ENCODE measurements at regions of chr15 and their contacts with region 1.

Region 1: DNA sequence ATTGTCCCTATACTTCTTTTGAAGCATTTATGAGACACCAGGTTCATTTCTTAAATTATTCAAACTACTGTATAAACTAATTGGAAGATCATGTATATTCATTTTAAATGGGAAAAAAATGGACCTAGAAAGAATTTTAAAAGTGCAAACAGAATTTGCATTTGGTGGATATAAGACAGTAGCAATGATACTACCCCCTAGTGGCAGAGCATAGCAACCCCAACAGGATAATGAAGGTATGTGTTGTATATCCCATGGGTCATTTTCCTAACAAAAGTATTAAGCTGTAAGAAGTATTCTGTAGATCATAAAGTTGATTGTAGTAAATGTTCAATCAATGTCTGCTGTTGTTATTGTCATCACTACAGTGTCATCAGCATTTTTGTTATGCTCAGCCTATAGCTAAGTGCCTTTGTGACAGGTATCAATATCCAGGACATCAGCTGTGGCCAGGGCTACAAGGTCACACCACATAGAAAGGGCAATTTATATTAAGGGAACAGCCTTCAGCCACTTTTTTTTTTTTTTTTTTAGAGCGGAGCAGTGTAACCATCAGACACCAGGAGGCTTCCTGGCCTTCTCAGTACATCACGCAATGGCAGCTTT is 175.8 kb downstream of the FOXB1 start:
- DNase-seq: peak; percentile 24 to 42 (median 34)
- ATAC-seq: peak; percentile 86
- H3K4me3 ChIP-seq: no peak overlapping the region
- H3K27ac ChIP-seq: no peak overlapping the region
- H3K4me1 ChIP-seq: no peaks in the 10 kb centered on the region
- H3K27me3 ChIP-seq: peaks cover 6 to 9% of the 10 kb centered on the region in 2 experiments; a peak in 2 of 5 replicates
- CTCF ChIP-seq: peak; percentile 45 to 77 (median 61); a peak in 5 of 6 replicates
- EP300 ChIP-seq: no peak
- POLR2A ChIP-seq: no peak
- RAD21 ChIP-seq: peak; percentile 71 to 79

Region 2: DNA sequence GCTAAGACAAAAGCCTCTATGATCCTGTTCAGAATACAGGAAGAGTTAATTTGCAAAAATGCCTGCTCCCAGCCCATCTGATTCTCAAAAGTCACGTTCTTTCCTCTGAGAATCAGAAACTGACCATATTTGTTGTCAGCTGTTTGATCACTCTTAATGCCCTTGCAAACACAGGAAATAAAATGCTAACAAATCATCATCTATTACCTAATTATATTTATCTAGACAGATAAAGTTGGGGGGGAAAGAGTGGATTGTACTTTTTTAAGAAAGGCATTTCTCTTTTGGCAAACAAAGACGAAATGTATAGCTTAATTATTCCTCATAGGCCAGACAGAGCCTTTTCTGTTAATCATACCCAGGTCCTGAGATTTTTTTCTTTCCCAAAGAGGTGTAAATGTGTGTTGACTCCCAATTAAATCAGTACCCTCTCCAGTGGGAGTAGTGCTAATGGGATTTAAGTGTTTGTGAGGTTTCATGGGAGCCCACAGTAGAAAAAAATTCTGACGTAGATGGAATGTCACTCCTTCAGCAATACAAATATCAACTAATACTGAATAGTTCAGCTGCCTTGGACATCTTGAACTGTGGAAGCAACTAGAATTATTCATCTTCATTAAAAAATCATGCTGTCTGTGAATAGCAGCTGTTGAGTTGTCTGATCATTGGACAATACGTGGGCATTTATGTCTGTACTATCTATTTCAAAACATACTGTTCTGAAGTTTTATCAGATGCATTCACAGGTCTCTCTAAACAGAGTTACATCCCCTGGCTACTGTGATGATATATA is 468.2 kb before region 1 on chr15:
- CTCF ChIA-PET with region 1: no interaction called
- POLR2A ChIA-PET with region 1: no interaction called
- in situ Hi-C with region 1: loop called (anchors 10 kb)
- intact Hi-C with region 1: no loop called
- DNase-seq: no peak
- ATAC-seq: no peak
- H3K4me3 ChIP-seq: no peak overlapping the region
- H3K27ac ChIP-seq: no peak overlapping the region
- H3K4me1 ChIP-seq: no peaks in the 10 kb centered on the region
- H3K27me3 ChIP-seq: peaks cover 9 to 11% of the 10 kb centered on the region in 2 experiments; a peak in 4 of 5 replicates
- CTCF ChIP-seq: no peak
- EP300 ChIP-seq: no peak
- POLR2A ChIP-seq: no peak
- RAD21 ChIP-seq: no peak

Region 3: GRCh38 chr15:59725172-59725486 is 454.8 kb before region 1 on chr15:
- CTCF ChIA-PET with region 1: interaction called, 4 read pairs
- POLR2A ChIA-PET with region 1: no interaction called
- in situ Hi-C with region 1: no loop called
- intact Hi-C with region 1: loop called (anchors 10 kb)
- DNase-seq: no peak
- ATAC-seq: no peak
- H3K4me3 ChIP-seq: no peak overlapping the region
- H3K27ac ChIP-seq: no peak overlapping the region
- H3K4me1 ChIP-seq: no peaks in the 10 kb centered on the region
- H3K27me3 ChIP-seq: peaks cover 11 to 15% of the 10 kb centered on the region in 2 experiments
- CTCF ChIP-seq: no peak
- EP300 ChIP-seq: no peak
- POLR2A ChIP-seq: no peak
- RAD21 ChIP-seq: no peak

Region 4: GRCh38 chr15:59917504-59918157 is 262.3 kb before region 1 on chr15:
- CTCF ChIA-PET with region 1: interaction called, 3 read pairs
- POLR2A ChIA-PET with region 1: no interaction called
- in situ Hi-C with region 1: no loop called
- intact Hi-C with region 1: loop called (anchors 5 kb)
- DNase-seq: peak; percentile 35 to 63 (median 52)
- ATAC-seq: peak; percentile 100
- H3K4me3 ChIP-seq: no peak overlapping the region
- H3K27ac ChIP-seq: no peak overlapping the region
- H3K4me1 ChIP-seq: no peaks in the 10 kb centered on the region
- H3K27me3 ChIP-seq: peaks cover 0 to under 1% of the 10 kb centered on the region in 2 experiments; a peak in 2 of 5 replicates
- CTCF ChIP-seq: peak; percentile 66 to 70 (median 67)
- EP300 ChIP-seq: no peak
- POLR2A ChIP-seq: no peak
- RAD21 ChIP-seq: peak; percentile 75 to 78

Region 5: DNA sequence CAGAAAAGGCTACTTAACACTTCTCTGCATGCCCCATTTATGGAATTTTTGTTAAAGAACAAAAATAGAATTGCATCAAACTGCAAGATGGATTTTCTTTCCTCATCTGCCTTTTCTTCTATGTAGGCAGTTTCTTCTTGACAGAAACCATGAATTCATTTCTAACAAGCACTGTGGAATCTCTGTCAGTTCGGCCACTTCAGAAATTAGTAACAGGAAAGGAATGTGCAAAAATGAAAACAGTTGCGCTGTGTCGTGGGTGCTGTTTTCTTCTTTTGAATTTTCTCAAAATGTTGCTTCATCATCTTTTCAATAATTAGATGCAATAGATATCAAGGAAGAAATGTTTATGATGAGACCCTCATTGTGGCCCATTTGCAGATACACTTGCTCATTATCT is 24.2 kb before region 1 on chr15:
- CTCF ChIA-PET with region 1: no interaction called
- POLR2A ChIA-PET with region 1: no interaction called
- in situ Hi-C with region 1: no loop called
- intact Hi-C with region 1: no loop called
- DNase-seq: no peak
- ATAC-seq: no peak
- H3K4me3 ChIP-seq: no peak overlapping the region
- H3K27ac ChIP-seq: no peak overlapping the region
- H3K4me1 ChIP-seq: no peaks in the 10 kb centered on the region
- H3K27me3 ChIP-seq: peaks cover 0 to 2% of the 10 kb centered on the region in 2 experiments; a peak in 3 of 5 replicates
- CTCF ChIP-seq: no peak
- EP300 ChIP-seq: no peak
- POLR2A ChIP-seq: no peak
- RAD21 ChIP-seq: no peak

Region 6: DNA sequence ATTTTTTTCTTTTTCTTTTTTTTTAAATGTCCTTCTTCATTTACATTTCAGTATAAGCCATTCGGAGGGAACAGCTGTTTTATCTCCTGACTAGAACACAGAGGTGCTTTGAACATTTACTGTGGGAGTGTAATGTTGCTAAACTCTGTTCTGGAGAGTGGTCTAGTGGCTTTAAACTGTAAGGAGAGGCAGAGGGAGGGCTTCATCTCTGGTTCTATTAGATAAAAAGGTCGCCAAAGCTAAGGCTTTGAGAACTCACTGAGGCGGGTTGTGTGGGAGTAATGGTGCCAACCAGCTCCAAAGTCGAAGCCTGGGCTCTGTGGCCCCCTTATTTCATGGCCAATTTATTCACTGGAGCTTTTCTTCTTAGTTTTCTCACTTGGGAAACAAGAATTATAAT is 84.7 kb after region 1 on chr15:
- CTCF ChIA-PET with region 1: no interaction called
- POLR2A ChIA-PET with region 1: no interaction called
- in situ Hi-C with region 1: no loop called
- intact Hi-C with region 1: no loop called
- DNase-seq: no peak
- ATAC-seq: no peak
- H3K4me3 ChIP-seq: no peak overlapping the region
- H3K27ac ChIP-seq: no peak overlapping the region
- H3K4me1 ChIP-seq: no peaks in the 10 kb centered on the region
- H3K27me3 ChIP-seq: peaks cover 0 to 3% of the 10 kb centered on the region in 2 experiments; a peak in 1 of 5 replicates
- CTCF ChIP-seq: no peak
- EP300 ChIP-seq: no peak
- POLR2A ChIP-seq: no peak
- RAD21 ChIP-seq: no peak

Measured in K562 (cell line).